GM12878 (cell line): ENCODE measurements at regions of chr1 and their contacts with region 1.

Region 1: DNA sequence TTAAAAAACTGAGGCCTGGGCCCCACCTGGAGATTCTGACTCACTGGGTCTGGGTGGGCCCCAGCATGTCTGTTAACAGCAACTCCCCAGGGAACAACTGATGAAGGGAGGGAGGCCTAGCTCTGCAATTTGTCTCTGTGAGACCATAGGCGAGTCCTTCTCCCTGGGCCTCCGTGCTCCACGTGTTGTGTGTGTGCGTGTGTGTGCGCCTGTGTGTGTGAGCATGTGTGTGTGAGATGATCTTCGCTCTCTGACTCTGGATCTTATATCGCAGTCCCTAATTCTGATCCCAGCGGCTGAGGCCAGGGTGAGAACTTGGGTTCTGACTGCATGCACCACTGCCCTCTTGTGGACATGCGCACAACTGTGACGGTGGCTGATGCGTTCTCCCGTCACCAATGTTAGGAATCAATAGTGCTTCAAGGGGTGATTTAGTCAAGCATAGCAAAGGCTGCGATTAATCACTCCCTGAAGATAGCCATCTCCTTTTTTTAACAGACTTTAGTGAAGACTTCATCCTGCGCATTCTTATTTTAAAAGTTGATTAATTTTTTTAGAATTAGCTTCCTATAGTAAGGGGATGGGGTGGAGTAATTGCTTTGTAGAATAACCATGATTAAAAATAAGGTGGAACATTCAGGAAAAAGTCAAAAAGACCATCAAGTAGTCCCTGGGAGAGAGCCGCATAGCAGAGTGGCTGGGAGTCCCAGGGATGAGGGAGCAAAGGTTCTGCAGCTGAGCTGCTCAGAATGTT is 62.4 kb upstream of the USP24 start:
- DNase-seq: peak; percentile 59
- ATAC-seq: peak; percentile 98
- H3K4me3 ChIP-seq: no peak overlapping the region
- H3K27ac ChIP-seq: no peak overlapping the region
- H3K4me1 ChIP-seq: peaks cover 9% of the 10 kb centered on the region; the same call in 1 of the 2 replicates
- H3K27me3 ChIP-seq: no peaks in the 10 kb centered on the region
- CTCF ChIP-seq: peak; percentile 67 to 84 (median 82)
- EP300 ChIP-seq: no peak
- POLR2A ChIP-seq: no peak
- RAD21 ChIP-seq: peak; percentile 77

Region 2: GRCh38 chr1:55071477-55071876 is 206.1 kb before region 1 on chr1:
- CTCF ChIA-PET with region 1: interaction called, 13 read pairs
- POLR2A ChIA-PET with region 1: no interaction called
- RAD21 ChIA-PET with region 1: interaction called, 3 read pairs
- SMC1A ChIA-PET with region 1: interaction called, 5 read pairs
- in situ Hi-C with region 1: no loop called
- intact Hi-C with region 1: no loop called
- DNase-seq: no peak
- ATAC-seq: peak; percentile 64
- H3K4me3 ChIP-seq: no peak overlapping the region
- H3K27ac ChIP-seq: no peak overlapping the region
- H3K4me1 ChIP-seq: no peaks in the 10 kb centered on the region
- H3K27me3 ChIP-seq: no peaks in the 10 kb centered on the region
- CTCF ChIP-seq: peak; percentile 38 to 54 (median 53); a peak in 4 of 6 replicates
- EP300 ChIP-seq: no peak
- POLR2A ChIP-seq: no peak
- RAD21 ChIP-seq: 0 out of 2 replicates have a peak, but pooled peaks have one; percentile 7

Region 3: GRCh38 chr1:55147524-55147923 is 130.0 kb before region 1 on chr1:
- CTCF ChIA-PET with region 1: interaction called, 230 read pairs
- POLR2A ChIA-PET with region 1: interaction called, 6 read pairs
- RAD21 ChIA-PET with region 1: interaction called, 25 read pairs
- SMC1A ChIA-PET with region 1: interaction called, 47 read pairs
- in situ Hi-C with region 1: loop called (anchors 5 kb)
- intact Hi-C with region 1: no loop called
- DNase-seq: no peak
- ATAC-seq: no peak
- H3K4me3 ChIP-seq: no peak overlapping the region
- H3K27ac ChIP-seq: no peak overlapping the region
- H3K4me1 ChIP-seq: peaks cover 11% of the 10 kb centered on the region; the same call in 1 of the 2 replicates
- H3K27me3 ChIP-seq: no peaks in the 10 kb centered on the region
- CTCF ChIP-seq: no peak
- EP300 ChIP-seq: no peak
- POLR2A ChIP-seq: no peak
- RAD21 ChIP-seq: no peak

Region 4: GRCh38 chr1:55172272-55172671 is 105.3 kb before region 1 on chr1:
- CTCF ChIA-PET with region 1: interaction called, 15 read pairs
- POLR2A ChIA-PET with region 1: no interaction called
- RAD21 ChIA-PET with region 1: interaction called, 3 read pairs
- SMC1A ChIA-PET with region 1: interaction called, 3 read pairs
- in situ Hi-C with region 1: no loop called
- intact Hi-C with region 1: no loop called
- DNase-seq: no peak
- ATAC-seq: no peak
- H3K4me3 ChIP-seq: no peak overlapping the region
- H3K27ac ChIP-seq: no peak overlapping the region
- H3K4me1 ChIP-seq: no peaks in the 10 kb centered on the region
- H3K27me3 ChIP-seq: no peaks in the 10 kb centered on the region
- CTCF ChIP-seq: no peak
- EP300 ChIP-seq: no peak
- POLR2A ChIP-seq: no peak
- RAD21 ChIP-seq: no peak

Region 5: DNA sequence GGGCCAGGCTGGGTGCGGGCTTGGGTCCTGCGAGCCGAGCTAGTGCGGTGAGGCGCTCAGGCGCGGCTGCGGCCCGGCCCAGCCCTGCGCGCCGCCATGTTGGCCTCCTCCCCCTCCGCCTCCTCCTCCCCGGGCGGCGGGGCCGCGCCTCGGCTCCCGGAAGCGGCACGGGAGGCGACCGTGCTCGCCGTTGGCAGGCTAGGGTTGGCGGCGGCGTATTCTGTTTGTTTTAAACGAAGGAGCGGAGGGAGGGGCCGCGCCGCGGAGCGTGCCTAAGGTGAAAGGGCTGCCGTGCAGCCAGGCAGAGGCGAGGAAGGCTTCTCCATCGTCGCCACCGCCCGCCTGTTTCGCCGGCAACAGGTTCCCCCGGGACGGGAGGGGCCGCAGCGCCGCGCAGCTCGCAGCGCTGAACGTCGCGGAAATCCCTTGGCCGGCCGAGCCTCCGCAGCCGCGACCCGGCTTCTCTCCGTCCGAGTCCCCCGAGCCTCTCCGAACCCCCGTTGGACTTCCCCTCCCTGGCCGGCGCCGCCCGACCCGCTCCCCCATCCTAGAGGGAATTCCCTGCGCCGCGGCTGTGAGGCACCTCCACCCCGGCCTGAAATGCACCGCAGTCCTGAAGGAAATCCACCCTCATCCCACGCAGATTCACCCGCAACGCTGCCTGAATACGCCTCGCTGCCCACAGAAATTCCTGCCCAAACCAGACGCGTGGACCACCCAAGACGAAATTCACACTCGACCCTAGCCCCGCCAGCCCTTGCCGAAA is 62.1 kb before region 1 on chr1 and contains the start of gene USP24:
- CTCF ChIA-PET with region 1: interaction called, 16 read pairs
- POLR2A ChIA-PET with region 1: interaction called, 3 read pairs
- RAD21 ChIA-PET with region 1: interaction called, 3 read pairs
- SMC1A ChIA-PET with region 1: interaction called, 20 read pairs
- in situ Hi-C with region 1: no loop called
- intact Hi-C with region 1: loop called (anchors 2 kb)
- DNase-seq: no peak
- ATAC-seq: peak; percentile 86
- H3K4me3 ChIP-seq: peak within 1 kb of the TSS; percentile 89
- H3K27ac ChIP-seq: peak within 1 kb of the TSS; percentile 87
- H3K4me1 ChIP-seq: peaks cover 7% of the 10 kb centered on the region
- H3K27me3 ChIP-seq: no peaks in the 10 kb centered on the region
- CTCF ChIP-seq: no peak
- EP300 ChIP-seq: no peak
- POLR2A ChIP-seq: peak; percentile 95
- RAD21 ChIP-seq: no peak
- polyA plus RNA-seq, gene USP24: 4.6 to 6.4 TPM

Region 6: GRCh38 chr1:55337801-55338447 is 60.4 kb after region 1 on chr1:
- CTCF ChIA-PET with region 1: interaction called, 138 read pairs
- POLR2A ChIA-PET with region 1: no interaction called
- RAD21 ChIA-PET with region 1: interaction called, 24 read pairs
- SMC1A ChIA-PET with region 1: interaction called, 19 read pairs
- in situ Hi-C with region 1: no loop called
- intact Hi-C with region 1: no loop called
- DNase-seq: peak; percentile 13
- ATAC-seq: peak; percentile 95
- H3K4me3 ChIP-seq: no peak overlapping the region
- H3K27ac ChIP-seq: no peak overlapping the region
- H3K4me1 ChIP-seq: no peaks in the 10 kb centered on the region
- H3K27me3 ChIP-seq: peaks cover 0 to 1% of the 10 kb centered on the region in 2 experiments; a peak in 1 of 4 replicates
- CTCF ChIP-seq: peak; percentile 57 to 62 (median 57)
- EP300 ChIP-seq: no peak
- POLR2A ChIP-seq: no peak
- RAD21 ChIP-seq: peak; percentile 69

Region 7: DNA sequence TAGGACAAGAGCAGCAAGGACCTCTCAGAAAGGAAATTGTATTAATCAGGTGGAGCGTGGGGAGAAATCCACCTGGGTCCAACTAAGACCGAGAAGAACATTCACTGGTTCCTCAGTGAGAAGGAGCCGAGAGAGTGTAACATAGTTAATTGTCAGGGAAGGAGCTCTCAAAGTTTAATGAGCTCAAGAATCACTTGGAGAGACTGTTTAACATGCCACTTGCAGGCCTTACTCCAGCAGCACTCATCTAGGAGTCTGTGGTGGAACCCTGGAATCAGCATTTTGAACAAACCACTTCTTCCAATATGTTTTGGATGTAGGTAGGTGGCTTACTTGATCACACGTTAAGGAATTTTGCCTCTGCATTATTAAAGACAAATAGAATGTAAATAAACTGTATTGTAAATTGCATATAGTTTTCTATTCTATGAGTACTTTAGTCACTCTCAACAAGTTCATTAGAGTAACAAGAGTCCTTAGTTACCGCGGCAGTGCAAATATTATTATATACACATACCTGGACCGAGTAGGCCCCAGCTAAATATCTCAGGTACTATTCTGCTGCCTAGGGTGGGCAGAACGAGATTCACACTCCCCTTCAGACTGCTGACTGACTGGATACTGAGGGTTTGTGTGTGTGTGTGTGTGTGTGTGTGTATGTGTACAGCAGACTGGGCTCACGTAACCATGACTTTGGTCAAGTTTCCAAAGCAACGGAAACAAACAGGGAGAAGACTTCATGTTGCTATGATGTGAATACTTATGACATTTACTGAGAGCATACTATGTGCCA is 140.8 kb after region 1 on chr1:
- CTCF ChIA-PET with region 1: no interaction called
- POLR2A ChIA-PET with region 1: no interaction called
- RAD21 ChIA-PET with region 1: no interaction called
- SMC1A ChIA-PET with region 1: no interaction called
- in situ Hi-C with region 1: no loop called
- intact Hi-C with region 1: no loop called
- DNase-seq: no peak
- ATAC-seq: no peak
- H3K4me3 ChIP-seq: no peak overlapping the region
- H3K27ac ChIP-seq: no peak overlapping the region
- H3K4me1 ChIP-seq: no peaks in the 10 kb centered on the region
- H3K27me3 ChIP-seq: no peaks in the 10 kb centered on the region
- CTCF ChIP-seq: no peak
- EP300 ChIP-seq: no peak
- POLR2A ChIP-seq: no peak
- RAD21 ChIP-seq: no peak